ENCODE measurements at regions of chr16 and their contacts with region 1.

Region 1: GRCh38 chr16:57899771-57900661 is 70.9 kb downstream of the CNGB1 start:
- H3K4me3 ChIP-seq: no peak overlapping the region
- H3K27ac ChIP-seq: no peak overlapping the region
- H3K4me1 ChIP-seq: no peaks in the 10 kb centered on the region
- CTCF ChIP-seq: peak; percentile 80

Region 2: GRCh38 chr16:57675741-57676584 is 224.1 kb before region 1 on chr16:
- CTCF ChIA-PET with region 1: no interaction called
- POLR2A ChIA-PET with region 1: no interaction called
- H3K4me3 ChIP-seq: no peak overlapping the region
- H3K27ac ChIP-seq: no peak overlapping the region
- H3K4me1 ChIP-seq: no peaks in the 10 kb centered on the region
- CTCF ChIP-seq: no peak

Region 3: DNA sequence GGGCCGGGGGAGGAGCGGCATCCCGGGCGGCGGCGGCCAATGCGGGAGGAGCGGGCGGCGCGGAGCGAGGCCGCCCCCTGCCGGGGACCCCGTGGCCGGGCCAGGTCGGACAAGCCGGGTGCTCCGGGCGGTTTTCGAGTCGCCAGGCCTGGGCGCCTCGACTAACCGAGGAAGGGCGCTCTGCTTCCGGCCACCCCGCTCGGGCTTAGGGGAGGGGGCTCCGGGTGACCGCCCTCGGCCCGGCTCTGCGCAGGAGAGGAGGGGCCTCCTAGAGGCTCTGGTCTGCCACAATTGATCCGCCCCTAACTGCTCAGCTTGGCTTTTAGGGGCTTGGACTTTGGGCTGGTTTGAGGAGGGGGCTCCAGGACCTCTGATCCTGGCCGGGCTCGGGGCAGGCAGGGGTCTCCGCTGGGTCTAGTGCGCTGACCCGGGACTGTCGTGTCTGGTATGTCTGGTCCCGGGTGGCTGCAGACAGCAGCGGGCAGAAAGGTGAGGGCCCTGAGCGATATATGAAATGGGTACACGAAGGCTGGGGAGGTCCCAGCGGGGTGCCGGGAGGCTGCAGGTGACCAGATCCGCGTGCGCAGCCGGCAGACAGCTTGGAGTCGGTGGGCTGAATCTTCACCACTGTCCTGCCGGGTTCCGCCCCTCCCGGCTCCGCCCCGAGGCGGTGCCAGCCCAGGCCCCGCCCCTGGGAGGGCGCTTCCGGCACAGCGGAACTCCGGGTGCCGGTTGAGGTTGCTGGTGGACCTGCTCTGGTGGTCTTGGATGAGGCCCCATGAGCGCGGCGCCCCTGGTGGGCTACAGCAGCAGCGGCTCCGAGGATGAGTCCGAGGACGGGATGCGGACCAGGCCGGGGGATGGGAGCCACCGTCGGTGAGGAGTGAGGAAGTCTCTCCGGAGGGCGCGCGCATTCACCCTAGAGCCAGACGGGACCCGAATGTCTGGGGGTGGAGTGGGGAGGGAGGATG is 101.0 kb after region 1 on chr16 and contains the start of gene USB1:
- CTCF ChIA-PET with region 1: interaction called, 22 read pairs
- POLR2A ChIA-PET with region 1: no interaction called
- H3K4me3 ChIP-seq: peak within 1 kb of the TSS; percentile 77
- H3K27ac ChIP-seq: peak within 1 kb of the TSS; percentile 40; the same call in 1 of the 2 replicates
- H3K4me1 ChIP-seq: no peaks in the 10 kb centered on the region
- CTCF ChIP-seq: peak; percentile 76

Measured in HEK293 (cell line).